ENCODE measurements at regions of chr19 and their contacts with region 1.

Region 1: GRCh38 chr19:20278342-20278741 is 111.3 kb downstream of the ZNF486 start:
- DNase-seq: no peak
- H3K4me3 ChIP-seq: no peak overlapping the region
- H3K27ac ChIP-seq: no peak overlapping the region
- H3K4me1 ChIP-seq: no peaks in the 10 kb centered on the region
- H3K27me3 ChIP-seq: no peaks in the 10 kb centered on the region
- CTCF ChIP-seq: peak in 1 of 4 experiments; percentile 48
- EP300 ChIP-seq: no peak
- POLR2A ChIP-seq: no peak

Region 2: GRCh38 chr19:19997656-19998268 is 280.6 kb before region 1 on chr19:
- intact Hi-C with region 1: loop called (anchors 5 kb)
- DNase-seq: no peak
- H3K4me3 ChIP-seq: no peak overlapping the region
- H3K27ac ChIP-seq: no peak overlapping the region
- H3K4me1 ChIP-seq: no peaks in the 10 kb centered on the region
- H3K27me3 ChIP-seq: no peaks in the 10 kb centered on the region
- CTCF ChIP-seq: peak in 3 of 4 experiments; percentile 20 to 60 (median 25)
- EP300 ChIP-seq: no peak
- POLR2A ChIP-seq: no peak